Prostate gland (tissue), 2 donors: ENCODE measurements at regions of chr2 and their contacts with region 1.

Region 1: DNA sequence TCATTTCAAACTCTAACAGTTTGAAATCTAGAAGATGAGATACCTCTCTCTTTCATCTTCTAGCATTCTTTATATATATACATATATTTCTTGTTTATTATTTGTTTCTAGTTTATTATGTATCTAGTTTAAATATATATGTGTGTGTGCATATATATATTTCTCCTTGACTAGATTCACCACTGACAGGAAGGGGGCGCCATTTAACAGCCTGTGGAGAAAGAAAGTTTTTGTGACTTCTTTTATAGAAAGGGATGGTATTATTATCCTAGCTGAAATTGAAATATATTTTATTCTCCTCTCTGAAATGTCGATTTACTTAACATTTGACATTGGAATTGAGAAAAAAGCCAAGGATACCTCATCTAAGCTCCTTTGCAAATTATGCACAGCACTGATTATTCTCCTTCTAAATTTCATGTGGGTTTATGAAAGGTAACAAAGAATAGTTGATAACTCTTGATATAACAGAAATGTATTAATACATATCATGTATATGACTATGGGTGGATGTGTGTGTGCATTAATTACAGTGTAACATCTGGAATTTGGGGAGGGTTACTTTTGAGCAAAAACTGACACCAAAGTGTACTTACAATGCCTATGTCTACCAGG is 160.7 kb upstream of the NT5C1B start:
- DNase-seq: peak; percentile 67
- H3K4me3 ChIP-seq: no peak overlapping the region
- H3K27ac ChIP-seq: no peak overlapping the region
- H3K4me1 ChIP-seq: no peaks in the 10 kb centered on the region
- H3K27me3 ChIP-seq: no peaks in the 10 kb centered on the region
- CTCF ChIP-seq: peak; percentile 39 to 88 (median 81)
- POLR2A ChIP-seq: no peak

Region 2: DNA sequence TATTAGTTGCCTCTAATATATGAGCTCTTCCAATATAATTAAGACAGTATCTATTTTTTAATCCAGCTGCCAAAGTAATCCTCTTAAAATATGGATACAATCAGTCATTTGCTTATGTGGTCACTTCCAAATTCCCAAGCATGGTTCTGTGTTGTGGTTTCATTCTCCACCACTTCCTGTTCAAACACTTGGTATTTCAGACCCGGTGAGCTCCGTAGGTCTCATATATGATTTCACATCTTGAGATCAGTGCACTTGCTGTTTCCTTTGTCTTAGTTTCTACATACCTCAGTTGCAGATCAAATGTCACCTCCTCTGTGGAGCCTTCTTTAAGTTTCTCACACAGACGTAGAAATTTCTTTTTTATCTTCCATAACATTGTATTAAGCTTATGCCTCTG is 617.3 kb before region 1 on chr2:
- intact Hi-C with region 1: no loop called
- DNase-seq: no peak
- H3K4me3 ChIP-seq: no peak overlapping the region
- H3K27ac ChIP-seq: no peak overlapping the region
- H3K4me1 ChIP-seq: no peaks in the 10 kb centered on the region
- H3K27me3 ChIP-seq: no peaks in the 10 kb centered on the region
- CTCF ChIP-seq: no peak
- POLR2A ChIP-seq: no peak

Region 3: DNA sequence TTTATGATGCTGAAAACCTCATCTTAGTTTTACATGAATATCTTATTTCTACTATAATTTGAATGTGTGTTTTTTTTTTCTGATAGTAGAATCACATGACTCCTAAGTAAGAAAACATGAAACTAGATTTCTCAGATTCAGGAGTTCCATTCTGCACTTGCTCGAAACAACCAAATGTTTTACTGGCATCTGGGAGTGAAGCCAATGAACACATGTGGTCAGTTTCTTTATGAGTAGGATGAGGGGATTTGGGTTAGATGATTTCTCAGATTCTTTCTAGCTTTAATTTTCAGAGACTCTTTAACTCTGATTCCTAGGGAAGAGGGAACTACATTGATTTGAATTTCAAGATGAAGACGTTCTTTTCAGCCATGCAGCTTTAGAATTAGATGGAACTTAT is 64.4 kb after region 1 on chr2:
- intact Hi-C with region 1: no loop called
- DNase-seq: no peak
- H3K4me3 ChIP-seq: no peak overlapping the region
- H3K27ac ChIP-seq: no peak overlapping the region
- H3K4me1 ChIP-seq: no peaks in the 10 kb centered on the region
- H3K27me3 ChIP-seq: no peaks in the 10 kb centered on the region
- CTCF ChIP-seq: no peak
- POLR2A ChIP-seq: no peak

Region 4: DNA sequence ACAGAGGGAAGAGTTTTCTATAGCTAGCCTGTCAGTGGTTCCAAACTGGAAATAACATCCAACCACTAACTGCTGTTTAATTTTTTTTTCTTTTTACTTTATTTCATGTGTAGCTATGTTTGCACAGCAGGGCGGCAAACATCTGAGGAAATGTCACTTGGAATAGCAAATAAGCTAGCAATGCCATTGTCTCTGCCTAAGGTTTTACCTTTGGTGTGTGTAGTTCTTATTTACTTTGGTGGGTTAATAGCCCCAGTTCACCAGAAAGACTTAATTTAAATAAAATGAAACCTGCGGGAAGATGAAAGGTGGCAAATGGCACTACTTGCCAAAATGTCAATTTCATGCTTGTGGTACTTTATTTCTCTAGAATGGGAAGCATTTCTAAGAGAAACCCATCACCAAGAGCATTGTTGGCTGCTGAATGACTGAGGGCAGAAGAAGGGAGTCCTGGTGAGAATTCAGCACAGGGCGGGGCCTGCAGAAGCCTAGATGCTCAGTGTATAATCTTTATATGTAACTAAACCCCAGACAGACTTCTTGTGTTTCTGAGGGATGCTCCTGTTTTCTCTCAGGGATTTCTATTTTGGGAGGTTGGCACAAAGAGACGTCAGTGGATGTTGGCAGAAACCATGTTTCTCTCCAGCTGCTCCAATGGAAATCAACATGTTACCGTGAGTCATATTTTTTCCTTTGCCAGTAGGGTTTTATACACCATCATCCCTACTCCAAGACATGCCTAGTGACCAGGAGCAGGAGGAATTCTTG is 139.7 kb after region 1 on chr2:
- intact Hi-C with region 1: loop called (anchors 10 kb)
- DNase-seq: no peak
- H3K4me3 ChIP-seq: no peak overlapping the region
- H3K27ac ChIP-seq: no peak overlapping the region
- H3K4me1 ChIP-seq: no peaks in the 10 kb centered on the region
- H3K27me3 ChIP-seq: no peaks in the 10 kb centered on the region
- CTCF ChIP-seq: no peak
- POLR2A ChIP-seq: no peak

Region 5: GRCh38 chr2:18976168-18976961 is 226.3 kb after region 1 on chr2:
- intact Hi-C with region 1: loop called (anchors 5 kb)
- DNase-seq: no peak
- H3K4me3 ChIP-seq: peak overlapping the region in 1 of 2 donors; percentile 15
- H3K27ac ChIP-seq: peak overlapping the region; percentile 58 to 62
- H3K4me1 ChIP-seq: no peaks in the 10 kb centered on the region
- H3K27me3 ChIP-seq: no peaks in the 10 kb centered on the region
- CTCF ChIP-seq: no peak
- POLR2A ChIP-seq: no peak

Region 6: DNA sequence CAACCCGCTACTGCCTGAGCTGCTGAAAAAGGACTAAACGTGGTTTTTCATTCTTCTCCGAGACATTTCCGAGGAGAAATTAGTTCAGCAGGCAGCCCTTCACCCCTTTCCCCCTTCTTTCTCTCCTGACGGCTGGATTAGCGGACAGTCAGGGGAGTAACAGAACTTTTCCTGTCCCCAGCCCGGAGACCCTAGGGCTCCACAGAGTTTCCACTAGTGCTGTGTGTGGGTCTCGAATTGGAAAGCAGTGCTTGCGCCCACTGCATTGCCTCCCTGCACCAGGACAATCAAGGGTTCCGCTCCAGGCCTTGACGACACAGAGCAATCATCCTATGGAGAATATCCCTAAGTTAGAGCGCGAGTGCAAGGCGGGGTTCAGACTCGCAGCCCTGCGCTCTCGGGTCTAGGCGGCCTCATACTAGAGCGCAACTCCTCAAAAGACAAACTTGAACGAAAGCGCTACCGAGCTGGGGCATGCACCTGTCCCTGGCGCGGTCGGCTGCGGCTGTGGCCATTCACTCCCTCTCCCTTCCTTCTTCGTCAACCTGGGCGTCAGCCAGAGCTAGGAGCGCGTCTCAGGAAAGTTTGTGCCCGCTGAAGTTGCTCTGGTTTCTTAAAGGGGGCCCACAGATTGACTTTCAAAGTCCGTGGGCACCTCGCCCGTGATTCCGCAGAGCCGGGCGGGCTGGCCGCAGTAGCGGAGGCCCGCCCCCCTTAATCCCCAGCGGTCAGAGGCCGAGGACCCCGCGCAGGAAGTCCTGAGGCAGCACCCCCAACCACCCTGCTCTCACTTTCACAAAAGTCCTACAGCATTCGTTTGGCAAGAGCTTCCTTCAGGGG is 607.6 kb after region 1 on chr2:
- intact Hi-C with region 1: loop called (anchors 2 kb)
- DNase-seq: peak; percentile 35
- H3K4me3 ChIP-seq: peak overlapping the region; percentile 47 to 61
- H3K27ac ChIP-seq: peak overlapping the region; percentile 73 to 77
- H3K4me1 ChIP-seq: no peaks in the 10 kb centered on the region
- H3K27me3 ChIP-seq: peaks cover 5% of the 10 kb centered on the region
- CTCF ChIP-seq: no peak
- POLR2A ChIP-seq: no peak

Region 7: GRCh38 chr2:19863303-19864041 is 1113.5 kb after region 1 on chr2:
- intact Hi-C with region 1: loop called (anchors 5 kb)
- DNase-seq: peak; percentile 44
- H3K4me3 ChIP-seq: no peak overlapping the region
- H3K27ac ChIP-seq: no peak overlapping the region
- H3K4me1 ChIP-seq: no peaks in the 10 kb centered on the region
- H3K27me3 ChIP-seq: no peaks in the 10 kb centered on the region
- CTCF ChIP-seq: peak; percentile 79 to 96 (median 92)
- POLR2A ChIP-seq: no peak